ENCODE measurements at regions of chr19 and their contacts with region 1.

Region 1: DNA sequence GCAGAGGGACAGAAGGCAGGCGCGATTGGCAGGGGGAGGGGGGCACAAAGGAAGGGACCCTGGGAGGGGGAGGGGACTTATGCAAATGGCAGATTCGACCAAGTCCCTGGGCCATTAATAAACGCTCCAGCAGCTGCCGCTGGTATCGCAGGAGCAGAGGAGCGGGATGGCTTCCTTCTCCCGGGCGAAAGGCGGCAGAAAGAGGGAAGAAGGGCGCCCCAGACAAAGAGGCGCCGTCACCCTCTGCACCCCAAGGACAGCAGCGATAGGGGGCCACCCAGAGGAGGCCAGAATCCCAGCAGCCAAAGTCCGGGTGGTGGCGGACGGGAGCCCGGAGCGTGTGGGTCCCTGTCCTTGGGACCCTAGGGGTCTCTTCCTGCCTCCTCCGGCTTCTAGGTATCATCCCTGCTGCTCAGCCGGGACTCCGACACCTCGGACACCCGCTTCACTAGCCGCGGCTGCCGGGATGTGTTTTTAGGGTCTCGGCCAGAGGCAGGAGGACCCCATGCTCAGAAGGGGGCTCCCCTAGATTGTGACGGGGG is 1.9 kb downstream of the PTPRS start:
- DNase-seq: peak; percentile 49
- ATAC-seq: no peak
- H3K4me3 ChIP-seq: peak overlapping the region in 1 of 5 experiments; percentile 61
- H3K4me3 Mint-ChIP-seq: peak overlapping the region; percentile 82
- H3K27ac ChIP-seq: no peak overlapping the region
- H3K27ac Mint-ChIP-seq: no peak overlapping the region
- H3K4me1 ChIP-seq: peaks cover 38% of the 10 kb centered on the region in 2 donors
- H3K4me1 Mint-ChIP-seq: peaks cover 33% of the 10 kb centered on the region
- H3K27me3 ChIP-seq: peaks cover 0 to 71% (median 41%) of the 10 kb centered on the region in 4 experiments
- H3K27me3 Mint-ChIP-seq: peaks cover 62% of the 10 kb centered on the region
- CTCF ChIP-seq: no peak

Region 2: DNA sequence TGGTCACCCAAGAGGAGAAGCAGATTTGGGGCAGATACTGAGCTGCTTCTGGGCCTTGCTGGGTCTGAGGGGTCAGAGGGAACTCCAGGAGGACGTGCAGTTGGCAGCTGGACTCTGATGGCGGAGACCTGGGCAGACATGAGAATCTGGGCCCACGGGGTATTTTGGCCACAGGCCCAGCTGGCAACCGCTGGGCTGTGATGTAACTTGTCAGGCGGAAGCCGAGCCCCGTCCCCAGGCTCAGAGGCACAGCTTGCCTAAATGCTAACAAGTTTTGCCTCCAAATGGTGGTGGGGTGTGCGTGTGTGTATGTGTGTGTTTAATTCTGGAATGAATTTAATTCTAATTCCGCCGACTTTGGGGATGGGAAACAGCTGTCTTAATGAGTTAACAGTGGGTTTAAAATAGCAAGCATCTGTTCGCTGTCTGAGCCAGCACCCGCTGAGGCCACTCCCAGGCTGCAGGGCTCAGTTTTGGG is 128.1 kb after region 1 on chr19:
- CTCF ChIA-PET with region 1: no interaction called
- POLR2A ChIA-PET with region 1: interaction called, 10 read pairs
- intact Hi-C with region 1: no loop called
- DNase-seq: no peak
- ATAC-seq: no peak
- H3K4me3 ChIP-seq: no peak overlapping the region
- H3K4me3 Mint-ChIP-seq: no peak overlapping the region
- H3K27ac ChIP-seq: no peak overlapping the region
- H3K27ac Mint-ChIP-seq: no peak overlapping the region
- H3K4me1 ChIP-seq: no peaks in the 10 kb centered on the region
- H3K4me1 Mint-ChIP-seq: no peaks in the 10 kb centered on the region
- H3K27me3 ChIP-seq: peaks cover 0 to 4% (median 2%) of the 10 kb centered on the region in 4 experiments
- H3K27me3 Mint-ChIP-seq: peaks cover 14% of the 10 kb centered on the region
- CTCF ChIP-seq: no peak

Measured in B cell (primary cell).